ENCODE measurements at regions of chr10 and their contacts with region 1.

Region 1: DNA sequence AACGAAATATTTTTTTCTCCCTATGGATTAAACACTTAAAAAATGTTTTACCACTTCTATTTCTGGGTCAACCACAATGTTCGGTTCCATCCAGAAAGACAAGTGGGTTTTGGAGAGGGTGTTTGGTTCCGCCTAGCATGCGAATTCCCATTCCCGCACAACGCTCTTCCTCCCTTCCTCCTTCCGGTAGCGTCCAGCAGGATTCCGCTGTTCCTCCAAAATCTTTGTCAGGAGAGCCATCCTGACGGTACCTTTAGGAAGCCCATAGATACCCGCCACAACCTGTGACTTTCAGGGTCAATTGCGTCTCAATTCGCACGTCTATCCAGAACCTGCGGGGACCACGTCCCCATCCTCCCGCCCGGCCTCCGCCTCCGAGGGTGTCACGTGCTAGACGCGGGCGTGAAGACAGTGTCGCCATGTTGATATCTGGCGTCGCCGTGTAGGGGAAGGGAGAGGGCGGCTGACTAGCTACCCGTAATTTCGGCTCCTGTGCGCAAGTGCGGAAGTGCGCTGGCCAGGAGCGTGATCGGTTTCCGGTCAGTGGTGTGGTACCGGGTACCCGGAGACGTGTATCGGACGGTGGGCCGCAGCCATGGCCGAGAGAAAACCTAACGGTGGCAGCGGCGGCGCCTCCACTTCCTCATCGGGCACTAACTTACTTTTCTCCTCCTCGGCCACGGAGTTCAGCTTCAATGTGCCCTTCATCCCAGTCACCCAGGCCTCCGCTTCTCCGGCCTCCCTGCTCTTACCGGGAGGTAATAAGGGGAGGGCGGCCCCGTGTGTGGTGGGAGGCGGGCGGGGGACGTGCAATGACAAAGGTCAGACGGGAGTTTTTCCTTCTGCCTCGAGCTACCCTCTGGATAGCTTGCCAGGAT is at the start of gene SEC23IP:
- DNase-seq: peak; percentile 90
- ATAC-seq: peak; percentile 89
- H3K4me3 ChIP-seq: peak within 1 kb of the TSS; percentile 93
- H3K27ac ChIP-seq: peak within 1 kb of the TSS; percentile 54
- H3K4me1 ChIP-seq: peaks cover 35% of the 10 kb centered on the region
- H3K27me3 ChIP-seq: no peaks in the 10 kb centered on the region
- CTCF ChIP-seq: no peak
- total RNA-seq, gene SEC23IP: 39.3 and 42.7 TPM in 2 replicates

Region 2: DNA sequence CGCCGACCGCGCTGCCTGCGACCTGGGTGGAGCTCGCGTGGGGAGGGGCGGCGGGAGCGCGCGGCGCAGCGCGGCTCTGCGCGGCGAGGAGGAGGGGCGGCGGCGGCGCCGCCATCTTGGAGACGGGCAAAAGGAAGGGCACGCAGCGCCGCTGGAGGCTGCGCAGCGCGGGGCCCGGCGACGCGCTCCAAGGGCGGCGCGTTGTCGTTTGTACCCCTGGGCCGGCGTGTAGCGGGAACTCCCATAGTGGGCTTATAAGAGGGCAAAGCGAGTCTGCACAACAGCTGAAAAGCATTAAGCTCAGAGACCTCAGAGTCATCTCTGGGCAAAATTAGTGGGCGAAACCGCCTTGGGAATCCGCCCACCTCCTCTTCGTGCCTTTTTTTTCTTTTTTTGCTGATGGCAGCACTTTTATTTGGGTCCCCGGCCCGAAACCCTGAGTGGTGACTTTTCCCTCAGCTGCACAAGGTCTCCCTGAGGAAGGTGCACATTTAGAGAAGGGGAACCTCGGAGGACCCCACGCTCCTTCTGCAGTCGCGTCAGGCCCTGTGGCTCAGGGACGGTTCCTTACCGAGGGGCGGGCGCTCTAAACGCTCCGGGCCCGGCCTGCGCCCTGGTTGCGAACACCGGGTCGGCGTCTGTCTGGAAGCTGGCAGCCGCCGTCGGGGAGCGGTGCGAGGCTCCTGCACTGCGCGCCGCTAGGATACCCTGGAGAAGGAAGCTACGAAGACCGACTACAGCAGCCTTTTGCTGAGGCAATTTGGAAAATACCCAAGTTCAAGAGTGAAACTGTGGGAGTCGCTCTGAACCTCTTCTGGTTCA is 19.4 kb before region 1 on chr10:
- CTCF ChIA-PET with region 1: no interaction called
- POLR2A ChIA-PET with region 1: no interaction called
- intact Hi-C with region 1: loop called (anchors 1 kb)
- DNase-seq: peak; percentile 81
- ATAC-seq: peak; percentile 91
- H3K4me3 ChIP-seq: peak overlapping the region; percentile 94
- H3K27ac ChIP-seq: peak overlapping the region; percentile 4; the same call in 1 of the 2 replicates
- H3K4me1 ChIP-seq: peaks cover 9% of the 10 kb centered on the region; the same call in 1 of the 2 replicates
- H3K27me3 ChIP-seq: no peaks in the 10 kb centered on the region
- CTCF ChIP-seq: no peak

Region 3: DNA sequence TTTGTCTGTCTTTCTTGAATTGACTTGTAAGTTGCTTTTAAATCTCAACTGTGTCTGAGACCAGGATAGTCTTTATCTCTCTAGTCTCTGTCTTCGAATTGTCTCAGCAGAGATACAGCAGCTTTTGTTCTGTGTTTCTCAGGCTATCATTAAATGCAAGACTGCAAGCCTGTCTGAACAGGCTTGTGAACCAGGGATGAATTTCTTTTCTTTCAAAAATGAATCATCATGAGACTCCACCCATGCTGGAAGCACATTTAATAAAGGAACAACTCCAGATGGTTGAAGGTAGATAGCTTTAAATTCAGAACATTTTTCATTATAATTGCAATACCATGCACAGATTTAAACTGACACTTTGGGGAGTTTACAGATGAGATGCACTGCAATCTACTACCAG is 156.0 kb after region 1 on chr10:
- CTCF ChIA-PET with region 1: no interaction called
- POLR2A ChIA-PET with region 1: no interaction called
- intact Hi-C with region 1: no loop called
- DNase-seq: peak; percentile 13
- ATAC-seq: no peak; the same call in 1 of the 2 replicates
- H3K4me3 ChIP-seq: no peak overlapping the region
- H3K27ac ChIP-seq: no peak overlapping the region
- H3K4me1 ChIP-seq: no peaks in the 10 kb centered on the region
- H3K27me3 ChIP-seq: no peaks in the 10 kb centered on the region
- CTCF ChIP-seq: no peak